ENCODE measurements at regions of chr3 and their contacts with region 1.

Region 1: GRCh38 chr3:71201939-71202338 is 381.6 kb downstream of the FOXP1 start:
- DNase-seq: no peak
- ATAC-seq: no peak
- H3K4me3 ChIP-seq: no peak overlapping the region
- H3K4me3 Mint-ChIP-seq: no peak overlapping the region
- H3K27ac ChIP-seq: no peak overlapping the region
- H3K27ac Mint-ChIP-seq: peak overlapping the region; percentile 55
- H3K4me1 ChIP-seq: peaks cover 30% of the 10 kb centered on the region
- H3K4me1 Mint-ChIP-seq: peaks cover 68% of the 10 kb centered on the region
- H3K27me3 ChIP-seq: no peaks in the 10 kb centered on the region
- H3K27me3 Mint-ChIP-seq: no peaks in the 10 kb centered on the region
- CTCF ChIP-seq: no peak

Region 2: DNA sequence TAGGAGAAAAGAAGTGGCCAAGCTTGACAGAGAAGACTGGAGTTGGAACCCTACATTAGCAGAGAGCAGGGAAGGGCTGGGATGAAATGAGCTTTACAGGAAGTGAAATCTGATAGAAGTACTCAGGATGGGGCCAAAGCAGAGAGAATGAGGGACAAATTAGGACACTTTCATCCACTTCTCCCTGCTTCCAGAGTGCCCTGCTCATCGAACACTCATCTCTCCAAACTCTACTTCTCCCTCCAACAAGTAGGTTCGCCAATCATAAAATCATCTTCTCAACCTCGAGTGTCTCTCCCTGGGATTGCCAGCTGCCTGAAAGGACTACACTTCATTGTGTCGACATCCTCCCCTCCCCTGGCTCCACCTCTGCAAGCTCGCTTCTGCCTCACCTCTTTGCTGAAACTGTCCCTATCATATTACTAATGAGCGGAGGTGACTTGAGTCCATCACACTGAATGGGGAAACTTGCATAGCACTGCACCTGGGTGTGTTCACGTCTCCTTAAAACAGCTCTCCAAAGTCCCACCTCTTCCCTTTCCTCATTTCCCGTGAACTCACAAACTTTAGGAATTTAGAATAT is 15.8 kb after region 1 on chr3:
- CTCF ChIA-PET with region 1: no interaction called
- POLR2A ChIA-PET with region 1: no interaction called
- intact Hi-C with region 1: loop called in 1 of 2 experiments (anchors 2 kb)
- DNase-seq: peak in 1 of 9 experiments; percentile 38
- ATAC-seq: no peak
- H3K4me3 ChIP-seq: no peak overlapping the region
- H3K4me3 Mint-ChIP-seq: no peak overlapping the region
- H3K27ac ChIP-seq: no peak overlapping the region
- H3K27ac Mint-ChIP-seq: peak overlapping the region; percentile 81
- H3K4me1 ChIP-seq: peaks cover 17% of the 10 kb centered on the region
- H3K4me1 Mint-ChIP-seq: peaks cover 76% of the 10 kb centered on the region
- H3K27me3 ChIP-seq: no peaks in the 10 kb centered on the region
- H3K27me3 Mint-ChIP-seq: no peaks in the 10 kb centered on the region
- CTCF ChIP-seq: no peak

Region 3: DNA sequence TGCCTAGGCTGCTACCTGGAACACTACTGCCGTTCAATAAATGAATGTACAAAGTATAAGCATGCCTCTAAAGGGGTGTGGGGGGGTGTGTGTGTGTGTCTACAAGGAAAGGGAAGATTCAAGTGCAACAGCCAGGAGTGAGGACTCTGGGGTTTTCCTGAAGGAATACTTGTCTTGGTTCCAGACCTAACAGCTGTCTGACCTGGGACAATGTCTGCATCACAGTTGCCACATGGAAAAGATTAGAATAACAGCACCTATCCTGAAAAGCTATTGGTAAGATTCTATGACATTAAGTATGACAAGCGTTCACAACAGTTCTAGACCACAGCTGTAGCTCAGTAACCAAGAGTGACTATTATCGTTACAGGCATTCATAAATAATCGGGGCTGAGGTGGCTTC is 36.4 kb after region 1 on chr3:
- CTCF ChIA-PET with region 1: no interaction called
- POLR2A ChIA-PET with region 1: no interaction called
- intact Hi-C with region 1: loop called in 1 of 2 experiments (anchors 5 kb)
- DNase-seq: peak in 1 of 9 experiments; percentile 32
- ATAC-seq: no peak
- H3K4me3 ChIP-seq: no peak overlapping the region
- H3K4me3 Mint-ChIP-seq: no peak overlapping the region
- H3K27ac ChIP-seq: no peak overlapping the region
- H3K27ac Mint-ChIP-seq: peak overlapping the region; percentile 37
- H3K4me1 ChIP-seq: peaks cover 16% of the 10 kb centered on the region
- H3K4me1 Mint-ChIP-seq: peaks cover 53% of the 10 kb centered on the region
- H3K27me3 ChIP-seq: no peaks in the 10 kb centered on the region
- H3K27me3 Mint-ChIP-seq: no peaks in the 10 kb centered on the region
- CTCF ChIP-seq: no peak

Measured in CD8-positive, alpha-beta T cell (primary cell).